ENCODE measurements at regions of chr15 and their contacts with region 1.

Region 1: DNA sequence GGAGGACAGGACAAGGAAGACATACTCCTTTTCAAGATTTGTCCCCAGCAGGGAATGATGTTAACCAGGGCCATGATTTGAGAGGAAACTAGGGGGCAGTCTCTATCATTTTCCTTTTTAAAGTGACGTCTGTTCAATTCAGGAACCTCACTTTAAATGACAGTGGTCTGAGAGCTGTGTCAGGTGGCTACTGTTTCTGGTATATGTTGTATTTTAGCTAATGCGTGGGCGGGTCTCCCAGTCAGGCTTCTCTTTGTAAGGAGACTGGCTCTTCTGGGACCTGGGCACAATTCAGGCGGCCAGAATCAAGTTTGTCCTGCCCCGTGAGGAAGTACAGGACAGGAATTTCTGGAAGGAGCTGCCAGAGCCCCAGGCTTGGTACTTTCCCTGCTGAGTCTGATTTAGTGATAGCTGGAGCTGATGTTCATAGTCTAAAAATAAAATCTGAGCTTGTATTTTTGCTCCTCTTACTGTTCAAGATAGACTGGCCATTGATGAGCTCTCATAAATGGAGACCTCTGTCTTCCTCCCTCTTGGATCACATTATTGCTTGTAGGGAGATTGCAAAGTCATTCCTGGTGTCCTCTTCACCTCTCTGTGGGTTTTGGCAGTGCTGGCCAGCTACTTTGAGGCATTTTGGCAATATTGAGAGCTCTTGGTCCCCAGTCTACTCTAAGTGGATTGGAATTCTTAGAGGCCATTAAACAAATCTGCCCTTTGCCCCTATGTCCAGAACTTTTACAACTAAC is 25.6 kb downstream of the SQOR start:
- DNase-seq: no peak
- ATAC-seq: peak; percentile 47; the same call in 1 of the 2 replicates
- H3K4me3 Mint-ChIP-seq: no peak overlapping the region
- H3K27ac Mint-ChIP-seq: no peak overlapping the region
- H3K4me1 Mint-ChIP-seq: peaks cover 3% of the 10 kb centered on the region
- H3K27me3 Mint-ChIP-seq: no peaks in the 10 kb centered on the region
- CTCF ChIP-seq: no peak

Region 2: DNA sequence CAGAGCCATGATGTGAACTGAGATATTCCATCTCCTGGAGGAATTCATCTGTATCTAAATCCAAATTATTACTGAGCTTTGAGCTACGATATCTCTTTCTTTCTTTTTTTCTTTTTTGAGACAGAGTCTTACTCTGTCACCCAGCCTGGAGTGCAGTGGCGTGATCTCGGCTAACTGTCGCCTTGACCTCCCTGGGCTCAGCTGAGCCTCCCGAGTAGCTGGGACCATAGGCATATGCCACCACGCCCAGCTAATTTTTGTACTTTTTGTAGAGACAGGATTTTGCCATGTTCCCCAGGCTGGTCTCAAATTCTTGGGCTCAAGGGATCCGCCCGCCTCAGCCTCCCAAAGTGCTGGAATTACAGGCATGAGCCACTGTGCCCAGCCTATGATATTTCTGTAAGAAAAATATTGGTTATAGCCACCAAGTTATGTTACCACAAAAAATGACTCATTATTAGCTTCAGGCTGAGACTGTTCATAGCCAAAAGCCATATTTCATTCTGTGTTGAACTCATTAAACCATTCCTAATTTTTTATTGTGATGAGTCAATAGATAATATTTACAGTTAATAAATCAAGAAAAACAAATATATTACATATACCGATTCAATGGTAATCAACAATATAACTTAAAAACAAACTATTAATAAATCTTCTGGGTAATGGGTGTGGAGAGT is 110.7 kb before region 1 on chr15:
- CTCF ChIA-PET with region 1: no interaction called
- POLR2A ChIA-PET with region 1: no interaction called
- DNase-seq: no peak
- ATAC-seq: no peak
- H3K4me3 Mint-ChIP-seq: no peak overlapping the region
- H3K27ac Mint-ChIP-seq: no peak overlapping the region
- H3K4me1 Mint-ChIP-seq: peaks cover 6% of the 10 kb centered on the region
- H3K27me3 Mint-ChIP-seq: peaks cover 15% of the 10 kb centered on the region
- CTCF ChIP-seq: no peak

Region 3: DNA sequence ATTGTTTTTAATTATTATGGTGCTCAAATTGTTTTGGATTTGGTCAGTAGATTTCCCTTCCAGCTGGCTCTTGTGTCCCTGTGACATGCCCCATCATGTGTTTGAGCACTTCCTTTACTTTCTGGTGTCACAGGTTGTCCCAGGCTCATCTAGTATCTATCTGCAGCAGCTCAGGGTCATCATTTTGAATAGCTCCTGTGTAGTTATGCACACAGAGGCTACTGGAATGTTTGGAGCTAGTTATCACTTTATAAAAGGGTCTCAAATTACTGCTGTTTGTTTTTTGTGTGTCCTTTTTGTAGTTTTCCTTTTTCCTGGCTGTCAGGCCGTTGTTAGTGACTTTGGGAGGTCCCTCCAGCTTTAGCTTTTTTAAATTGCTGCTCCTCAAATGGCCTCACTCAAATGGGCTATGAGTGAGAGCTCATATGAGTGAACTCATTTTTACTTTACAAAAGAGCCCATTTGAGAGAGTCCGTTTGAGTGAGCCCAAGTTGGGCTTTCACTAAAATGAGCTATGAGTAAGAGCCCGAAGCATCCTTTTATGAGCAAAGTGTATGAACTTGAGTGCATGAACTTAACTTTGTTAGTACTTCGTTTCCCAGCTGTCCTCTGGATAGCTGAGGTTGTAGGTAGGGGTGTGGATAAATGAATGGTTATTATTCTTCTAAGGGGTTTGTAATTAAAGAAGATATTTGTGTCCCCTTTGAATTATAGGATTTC is 18.2 kb after region 1 on chr15:
- CTCF ChIA-PET with region 1: interaction called, 10 read pairs
- POLR2A ChIA-PET with region 1: no interaction called
- DNase-seq: no peak
- ATAC-seq: no peak
- H3K4me3 Mint-ChIP-seq: no peak overlapping the region
- H3K27ac Mint-ChIP-seq: no peak overlapping the region
- H3K4me1 Mint-ChIP-seq: no peaks in the 10 kb centered on the region
- H3K27me3 Mint-ChIP-seq: peaks cover 3% of the 10 kb centered on the region; the same call in 1 of the 2 replicates
- CTCF ChIP-seq: no peak

Region 4: GRCh38 chr15:45705510-45706473 is 45.4 kb after region 1 on chr15:
- CTCF ChIA-PET with region 1: interaction called, 35 read pairs
- POLR2A ChIA-PET with region 1: no interaction called
- DNase-seq: peak; percentile 78
- ATAC-seq: peak; percentile 38
- H3K4me3 Mint-ChIP-seq: peak overlapping the region; percentile 84
- H3K27ac Mint-ChIP-seq: peak overlapping the region; percentile 41
- H3K4me1 Mint-ChIP-seq: peaks cover 14% of the 10 kb centered on the region
- H3K27me3 Mint-ChIP-seq: peaks cover 19% of the 10 kb centered on the region
- CTCF ChIP-seq: peak; percentile 95

Region 5: GRCh38 chr15:45903283-45903682 is 242.9 kb after region 1 on chr15:
- CTCF ChIA-PET with region 1: no interaction called
- POLR2A ChIA-PET with region 1: no interaction called
- DNase-seq: no peak
- ATAC-seq: no peak
- H3K4me3 Mint-ChIP-seq: no peak overlapping the region
- H3K27ac Mint-ChIP-seq: no peak overlapping the region
- H3K4me1 Mint-ChIP-seq: no peaks in the 10 kb centered on the region
- H3K27me3 Mint-ChIP-seq: no peaks in the 10 kb centered on the region
- CTCF ChIP-seq: no peak